ENCODE measurements at regions of chr19 and their contacts with region 1.

Region 1: DNA sequence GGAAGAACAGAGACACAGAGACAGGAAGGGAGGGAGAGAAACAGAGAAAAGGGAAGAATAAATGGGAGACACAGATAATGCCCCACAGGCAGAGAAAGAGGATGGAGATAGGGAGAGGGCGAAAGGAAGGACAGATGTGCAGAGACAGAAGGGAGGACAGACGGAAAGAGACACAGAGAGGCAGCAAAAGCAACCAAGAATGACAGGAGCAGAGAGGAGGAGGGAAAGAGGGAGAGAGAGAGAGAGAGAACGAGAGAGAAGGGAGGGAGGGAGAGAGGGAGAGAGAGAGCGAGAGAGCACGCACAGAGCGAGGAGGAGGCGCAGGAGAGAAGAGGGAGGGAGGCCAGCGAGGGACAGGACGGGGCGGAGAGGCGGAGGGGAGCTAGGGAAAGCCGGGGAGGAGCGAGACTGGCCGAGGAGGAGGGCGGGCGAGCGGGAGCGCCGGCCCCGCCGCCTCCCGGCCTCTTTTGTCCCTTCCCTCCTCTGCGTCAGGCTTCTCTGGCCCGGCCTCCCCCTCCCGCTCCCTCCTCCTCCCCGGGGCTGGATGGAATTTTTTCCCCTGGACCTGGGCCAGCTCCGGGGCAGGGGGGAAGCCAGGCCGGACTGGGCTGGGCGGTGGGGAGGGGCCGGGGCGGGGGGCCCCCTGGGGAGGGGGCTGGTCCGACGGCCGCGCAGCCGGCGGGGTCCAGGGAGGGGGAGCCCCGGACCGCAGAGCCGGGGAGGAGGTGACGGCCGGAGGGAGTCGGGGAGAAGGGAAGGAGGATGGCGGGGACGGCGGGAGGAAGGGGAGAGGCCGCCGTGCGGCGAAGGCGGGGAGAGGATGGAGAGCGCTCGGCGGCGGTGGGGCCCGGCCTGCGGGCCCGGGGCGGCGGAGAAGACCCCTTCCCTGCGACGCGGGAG is 4.2 kb upstream of the SPACA6 start:
- DNase-seq: peak; percentile 95 to 97 (median 96)
- ATAC-seq: peak; percentile 89 to 93
- H3K4me3 ChIP-seq: peak overlapping the region; percentile 98
- H3K27ac ChIP-seq: peak overlapping the region; percentile 90
- H3K4me1 ChIP-seq: peaks cover 2% of the 10 kb centered on the region
- H3K27me3 ChIP-seq: no peaks in the 10 kb centered on the region

Region 2: DNA sequence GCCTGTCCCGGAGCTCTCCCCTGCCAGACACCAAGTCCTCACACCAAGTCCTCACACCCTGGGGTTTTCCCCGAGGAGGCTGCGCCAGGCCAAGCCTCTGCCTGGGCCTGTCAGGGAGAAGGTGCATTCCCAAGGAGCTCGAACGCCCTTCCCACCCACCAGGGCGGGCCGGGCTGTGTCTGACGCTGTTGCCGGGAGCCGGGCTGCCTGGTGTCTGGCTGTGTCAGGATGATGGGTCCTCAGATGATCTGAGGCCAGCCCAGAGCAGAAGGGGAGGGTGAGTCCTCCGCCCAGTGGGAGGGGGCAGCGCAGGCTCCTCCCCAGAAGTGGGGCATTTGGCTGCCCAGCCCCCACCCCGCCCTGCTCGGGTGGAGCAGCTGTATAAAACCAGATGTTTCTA is 37.1 kb after region 1 on chr19:
- intact Hi-C with region 1: no loop called
- DNase-seq: peak; percentile 44 to 86 (median 79)
- ATAC-seq: peak; percentile 76 to 80
- H3K4me3 ChIP-seq: no peak overlapping the region
- H3K27ac ChIP-seq: no peak overlapping the region
- H3K4me1 ChIP-seq: no peaks in the 10 kb centered on the region
- H3K27me3 ChIP-seq: no peaks in the 10 kb centered on the region

Region 3: DNA sequence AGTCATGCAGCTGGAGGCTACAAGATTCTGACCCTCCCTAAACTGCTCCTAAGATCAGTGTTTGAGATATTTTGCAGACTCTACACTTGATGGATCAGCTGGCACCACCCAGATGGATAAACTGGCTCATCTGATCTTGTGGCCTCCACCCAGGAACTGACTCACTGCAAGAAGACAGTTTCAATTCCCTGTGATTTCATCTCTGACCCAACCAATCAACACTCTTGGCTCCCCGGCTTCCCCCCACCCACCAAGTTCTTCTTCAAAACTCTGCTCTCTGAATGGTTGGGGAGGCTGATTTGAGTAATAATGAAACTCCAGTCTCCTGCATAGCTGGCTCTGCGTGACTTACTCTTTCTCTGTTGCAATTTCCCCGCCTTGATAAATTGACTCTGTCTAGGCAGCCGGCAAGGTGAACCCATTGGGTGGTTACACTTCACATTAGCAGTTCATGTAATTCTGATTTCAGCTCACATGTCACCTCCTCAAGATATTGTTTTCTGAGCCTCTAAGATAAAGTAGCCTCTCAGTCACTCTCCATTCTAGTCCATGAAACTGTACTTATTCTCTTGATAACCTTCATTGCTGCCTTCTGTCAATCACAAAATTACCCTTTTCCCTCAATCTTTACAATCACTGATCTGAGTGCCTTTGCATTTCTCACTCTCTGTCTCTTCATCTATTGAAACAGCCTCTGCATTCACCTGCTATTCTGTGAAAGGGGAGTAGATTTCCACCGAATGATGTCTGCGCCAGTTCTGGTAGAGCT is 96.2 kb after region 1 on chr19:
- intact Hi-C with region 1: loop called in 1 of 4 experiments (anchors 10 kb)
- DNase-seq: peak; percentile 72 to 81 (median 75)
- ATAC-seq: peak; percentile 83 to 92
- H3K4me3 ChIP-seq: no peak overlapping the region
- H3K27ac ChIP-seq: peak overlapping the region; percentile 56
- H3K4me1 ChIP-seq: peaks cover 3% of the 10 kb centered on the region
- H3K27me3 ChIP-seq: no peaks in the 10 kb centered on the region

Region 4: GRCh38 chr19:51807111-51807701 is 118.3 kb after region 1 on chr19:
- intact Hi-C with region 1: loop called in 1 of 4 experiments (anchors 10 kb)
- DNase-seq: peak in 2 of 3 donors; percentile 71 to 74
- ATAC-seq: peak in 1 of 2 donors; percentile 35
- H3K4me3 ChIP-seq: no peak overlapping the region
- H3K27ac ChIP-seq: no peak overlapping the region
- H3K4me1 ChIP-seq: no peaks in the 10 kb centered on the region
- H3K27me3 ChIP-seq: no peaks in the 10 kb centered on the region